Right lobe of liver (tissue), 6 donors: ENCODE measurements at regions of chr4 and their contacts with region 1.

Region 1: DNA sequence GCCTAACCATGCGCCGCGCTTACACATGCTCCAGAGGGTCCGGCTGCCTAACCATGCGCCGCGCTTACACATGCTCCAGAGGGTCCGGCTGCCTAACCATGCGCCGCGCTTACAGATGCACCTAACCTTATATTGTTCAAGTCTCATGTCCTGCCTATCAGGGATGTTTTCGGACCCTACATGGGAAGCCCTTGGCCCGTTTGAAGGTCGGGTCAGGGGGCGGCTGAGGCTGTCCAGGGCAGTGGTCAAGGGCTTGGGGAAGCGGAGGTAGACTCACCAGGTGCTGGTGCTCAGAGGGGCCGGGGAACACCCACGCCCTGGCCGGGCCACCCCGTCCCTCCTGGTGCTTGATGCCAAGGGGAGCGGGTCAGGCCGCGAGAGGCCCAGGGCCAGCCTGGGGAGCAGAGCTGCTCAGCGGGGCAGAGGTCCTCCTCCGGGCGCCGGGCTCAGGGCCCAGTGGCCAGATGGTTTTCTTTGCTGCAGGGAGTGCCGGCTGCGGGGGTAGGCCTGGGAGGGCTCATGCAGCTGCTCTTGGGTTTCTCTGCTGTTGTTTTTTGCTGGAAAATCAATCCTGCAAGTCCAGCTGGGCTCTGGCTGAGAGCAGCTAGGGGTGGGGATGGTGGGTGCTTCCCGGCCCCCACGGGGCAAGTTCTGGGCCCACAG is 35.4 kb upstream of the SPON2 start:
- DNase-seq: peak; percentile 48 to 68 (median 61)
- ATAC-seq: peak; percentile 12 to 43 (median 28)
- H3K4me3 ChIP-seq: no peak overlapping the region
- H3K27ac ChIP-seq: peak overlapping the region in 1 of 3 donors; percentile 6
- H3K4me1 ChIP-seq: peaks cover 0 to 32% (median 9%) of the 10 kb centered on the region in 4 donors
- H3K27me3 ChIP-seq: no peaks in the 10 kb centered on the region
- CTCF ChIP-seq: no peak
- POLR2A ChIP-seq: no peak

Region 2: DNA sequence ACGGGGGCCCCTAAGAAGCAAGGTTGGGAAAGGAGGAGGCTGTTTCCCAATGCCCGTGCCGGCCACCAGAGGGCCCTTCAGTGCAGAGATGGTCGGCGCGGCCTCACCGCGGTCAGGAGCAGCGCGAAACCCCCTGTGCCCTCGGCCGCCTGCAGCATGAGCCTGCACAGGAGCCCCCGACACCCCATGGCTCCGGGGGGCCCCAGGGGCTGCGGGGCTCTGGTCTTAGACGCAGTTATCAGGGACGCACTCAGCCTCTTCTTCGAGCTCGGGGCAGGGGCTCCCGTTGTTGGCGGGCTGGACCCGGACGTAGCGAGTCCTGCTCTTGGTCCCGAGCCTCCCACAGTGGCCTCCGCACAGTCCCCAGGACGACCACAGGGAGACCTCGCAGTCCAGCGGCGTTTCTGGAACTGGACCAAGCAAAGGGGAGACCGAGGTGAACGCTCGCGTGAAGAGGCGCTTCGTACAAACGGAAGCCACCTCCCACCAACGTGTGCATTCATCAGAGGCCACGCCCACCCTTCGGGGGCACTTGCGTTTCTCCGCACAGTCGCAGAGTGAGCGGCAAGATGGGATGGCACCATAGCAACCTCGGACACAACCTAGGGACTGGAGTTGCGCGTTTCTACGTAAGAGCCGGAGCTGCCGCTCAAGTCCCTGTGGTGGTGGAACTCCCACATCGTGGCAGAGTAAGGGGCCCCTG is 40.3 kb before region 1 on chr4:
- intact Hi-C with region 1: loop called in 1 of 2 experiments (anchors 5 kb)
- DNase-seq: peak; percentile 80 to 85 (median 82)
- ATAC-seq: peak; percentile 82 to 91 (median 84)
- H3K4me3 ChIP-seq: peak overlapping the region; percentile 48 to 66 (median 58)
- H3K27ac ChIP-seq: peak overlapping the region in 2 of 3 donors; percentile 33 to 51
- H3K4me1 ChIP-seq: peaks cover 0 to 15% (median 0%) of the 10 kb centered on the region in 4 donors
- H3K27me3 ChIP-seq: no peaks in the 10 kb centered on the region
- CTCF ChIP-seq: peak; percentile 85 to 95 (median 90)
- POLR2A ChIP-seq: no peak